Endothelial cell of umbilical vein (primary cell): ENCODE measurements at regions of chr1 and their contacts with region 1.

Region 1: GRCh38 chr1:234326497-234327366 is 46.5 kb upstream of the COA6 start:
- DNase-seq: peak; percentile 56
- H3K4me3 ChIP-seq: peak overlapping the region; percentile 34 to 65 (median 40)
- H3K27ac ChIP-seq: no peak overlapping the region
- H3K4me1 ChIP-seq: no peaks in the 10 kb centered on the region
- H3K27me3 ChIP-seq: peaks cover 12 to 13% of the 10 kb centered on the region in 2 experiments
- CTCF ChIP-seq: peak; percentile 81 to 85
- POLR2A ChIP-seq: no peak

Region 2: DNA sequence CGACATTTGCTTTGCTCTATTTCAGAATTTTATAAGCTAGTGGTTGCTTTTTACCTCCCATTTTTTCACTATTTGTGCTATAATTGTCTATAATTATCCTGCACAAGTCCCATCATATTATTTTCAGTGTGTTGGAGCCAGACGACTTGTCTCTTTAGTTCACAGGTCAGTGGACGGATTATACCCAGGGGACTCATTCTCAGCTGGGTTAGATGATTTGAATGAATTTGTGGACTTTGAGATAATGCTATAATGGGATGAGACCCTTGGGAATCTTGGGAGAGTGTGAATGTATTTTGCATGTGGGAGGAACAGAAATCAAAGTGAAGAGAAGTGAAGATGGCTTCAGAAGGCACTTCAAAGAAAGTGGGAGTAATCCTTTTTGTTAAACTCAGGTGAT is 744.3 kb before region 1 on chr1:
- CTCF ChIA-PET with region 1: no interaction called
- POLR2A ChIA-PET with region 1: no interaction called
- dilution Hi-C with region 1: no loop called
- intact Hi-C with region 1: no loop called
- DNase-seq: no peak
- H3K4me3 ChIP-seq: no peak overlapping the region
- H3K27ac ChIP-seq: no peak overlapping the region
- H3K4me1 ChIP-seq: no peaks in the 10 kb centered on the region
- H3K27me3 ChIP-seq: no peaks in the 10 kb centered on the region
- CTCF ChIP-seq: no peak
- POLR2A ChIP-seq: no peak

Region 3: GRCh38 chr1:233885196-233886028 is 441.3 kb before region 1 on chr1:
- CTCF ChIA-PET with region 1: no interaction called
- POLR2A ChIA-PET with region 1: no interaction called
- dilution Hi-C with region 1: no loop called
- intact Hi-C with region 1: no loop called
- DNase-seq: no peak
- H3K4me3 ChIP-seq: no peak overlapping the region
- H3K27ac ChIP-seq: no peak overlapping the region
- H3K4me1 ChIP-seq: no peaks in the 10 kb centered on the region
- H3K27me3 ChIP-seq: no peaks in the 10 kb centered on the region
- CTCF ChIP-seq: no peak
- POLR2A ChIP-seq: no peak

Region 4: GRCh38 chr1:234154320-234155251 is 172.1 kb before region 1 on chr1:
- CTCF ChIA-PET with region 1: interaction called, 4 read pairs
- POLR2A ChIA-PET with region 1: no interaction called
- dilution Hi-C with region 1: no loop called
- intact Hi-C with region 1: loop called (anchors 1 kb)
- DNase-seq: peak; percentile 57
- H3K4me3 ChIP-seq: no peak overlapping the region
- H3K27ac ChIP-seq: no peak overlapping the region
- H3K4me1 ChIP-seq: no peaks in the 10 kb centered on the region
- H3K27me3 ChIP-seq: no peaks in the 10 kb centered on the region
- CTCF ChIP-seq: peak; percentile 56 to 57
- POLR2A ChIP-seq: no peak

Region 5: GRCh38 chr1:234337233-234337632 is 10.5 kb after region 1 on chr1:
- CTCF ChIA-PET with region 1: interaction called, 11 read pairs
- POLR2A ChIA-PET with region 1: no interaction called
- dilution Hi-C with region 1: no loop called
- intact Hi-C with region 1: no loop called
- DNase-seq: no peak
- H3K4me3 ChIP-seq: no peak overlapping the region
- H3K27ac ChIP-seq: no peak overlapping the region
- H3K4me1 ChIP-seq: no peaks in the 10 kb centered on the region
- H3K27me3 ChIP-seq: peaks cover 0 to 2% of the 10 kb centered on the region in 2 experiments
- CTCF ChIP-seq: no peak
- POLR2A ChIP-seq: no peak

Region 6: GRCh38 chr1:234473118-234473517 is 146.4 kb after region 1 on chr1:
- CTCF ChIA-PET with region 1: no interaction called
- POLR2A ChIA-PET with region 1: no interaction called
- dilution Hi-C with region 1: no loop called
- intact Hi-C with region 1: loop called (anchors 1 kb)
- DNase-seq: peak; percentile 81
- H3K4me3 ChIP-seq: no peak overlapping the region
- H3K27ac ChIP-seq: no peak overlapping the region
- H3K4me1 ChIP-seq: peaks cover 17% of the 10 kb centered on the region
- H3K27me3 ChIP-seq: no peaks in the 10 kb centered on the region
- CTCF ChIP-seq: no peak
- POLR2A ChIP-seq: no peak